Activated CD4-positive, alpha-beta T cell treated with anti-CD3 and anti-CD28 coated beads, Interleukin-2, amount 10 ng/mL, durations not matched to agents 24 days and 14 days (primary cell): ENCODE measurements at regions of chr22 and their contacts with region 1.

Region 1: GRCh38 chr22:20116951-20117645 is at the start of gene TRMT2A:
- DNase-seq: peak; percentile 99
- H3K4me3 Mint-ChIP-seq: peak within 1 kb of the TSS; percentile 96
- H3K27ac Mint-ChIP-seq: peak within 1 kb of the TSS; percentile 96
- H3K4me1 Mint-ChIP-seq: peaks cover 33% of the 10 kb centered on the region
- H3K27me3 Mint-ChIP-seq: peaks cover 2% of the 10 kb centered on the region
- total RNA-seq, gene TRMT2A: 125 and 135 TPM in 2 replicates

Region 2: DNA sequence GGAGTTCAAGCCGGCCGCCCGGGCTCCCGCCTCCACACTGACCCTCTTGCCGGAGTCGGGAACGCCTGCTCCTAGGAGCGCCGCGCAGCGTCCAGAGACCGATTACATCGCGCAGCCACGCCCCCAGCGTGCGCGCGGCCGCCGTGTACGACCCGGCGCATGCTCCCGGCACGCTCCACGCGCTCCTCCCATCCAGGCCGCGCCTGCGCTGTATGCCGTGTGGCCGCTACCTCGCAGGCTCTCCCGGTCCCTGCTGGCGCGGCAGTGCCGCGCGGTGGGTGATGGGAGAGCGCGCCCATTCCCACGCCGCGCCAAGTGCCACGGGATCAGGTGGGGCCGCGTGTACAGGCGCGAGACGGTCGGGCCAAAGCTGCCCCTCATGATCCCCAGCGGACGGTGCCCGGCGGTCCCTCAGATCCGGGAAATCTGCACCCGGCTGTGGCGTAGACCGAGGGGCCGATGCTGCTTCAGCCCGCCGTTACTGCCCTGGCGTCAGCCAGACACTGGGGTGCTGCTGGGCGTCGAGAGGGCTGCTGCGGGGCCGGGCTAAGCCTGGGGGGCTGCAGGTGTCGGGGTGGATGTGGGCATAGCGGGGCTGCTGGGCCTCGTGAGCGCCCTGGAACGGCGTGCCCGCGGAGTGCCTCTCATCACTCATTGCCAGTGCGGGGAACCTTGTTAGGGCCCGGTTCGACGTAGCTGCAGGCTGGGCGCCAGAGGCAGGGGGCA is 262.2 kb before region 1 on chr22 and contains the starts of genes GNB1L and RTL10:
- intact Hi-C with region 1: loop called (anchors 10 kb)
- DNase-seq: peak; percentile 99
- H3K4me3 Mint-ChIP-seq: peak within 1 kb of the TSS; percentile 92
- H3K27ac Mint-ChIP-seq: peak within 1 kb of the TSS; percentile 96
- H3K4me1 Mint-ChIP-seq: peaks cover 24% of the 10 kb centered on the region
- H3K27me3 Mint-ChIP-seq: no peaks in the 10 kb centered on the region
- total RNA-seq, gene GNB1L: 21.1 and 21.4 TPM in 2 replicates
- total RNA-seq, gene RTL10: 20.0 and 23.4 TPM in 2 replicates

Region 3: DNA sequence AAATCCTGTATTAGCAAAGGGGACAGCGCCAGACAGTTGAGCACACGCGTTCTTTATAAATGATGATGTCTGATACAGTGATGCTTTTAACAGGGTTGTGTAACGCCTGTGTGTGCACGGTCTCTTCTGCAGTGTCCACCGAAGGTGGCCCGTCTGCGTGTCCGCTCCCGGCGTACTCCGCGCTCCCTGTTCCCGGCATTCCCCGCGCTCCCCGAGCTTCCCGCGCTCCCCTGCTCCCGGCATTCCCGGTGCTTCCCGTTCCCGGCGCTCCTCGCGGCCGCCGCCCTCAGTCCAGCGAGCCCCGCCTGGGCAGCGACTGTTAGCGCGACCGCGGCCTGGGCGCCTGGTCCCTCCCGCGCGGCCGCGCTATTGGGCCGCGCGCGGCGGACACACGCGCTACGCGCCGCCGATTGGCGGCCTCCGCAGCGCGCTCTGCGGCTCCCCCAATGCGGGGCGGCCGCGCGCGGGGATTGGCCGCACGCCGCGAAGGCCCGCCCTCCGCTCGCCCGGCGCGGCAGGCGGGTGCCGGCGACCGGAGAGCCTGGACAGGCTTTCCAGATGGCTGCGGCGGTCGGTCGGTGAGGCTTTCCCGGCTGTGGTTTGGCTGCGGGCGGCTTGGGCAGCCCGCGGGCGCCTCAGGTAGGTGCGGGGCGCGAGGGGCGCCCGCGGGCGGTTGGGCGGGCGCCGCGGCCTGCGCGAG is 37.2 kb before region 1 on chr22 and contains the start of gene DGCR8:
- intact Hi-C with region 1: loop called (anchors 1 kb)
- DNase-seq: peak; percentile 93
- H3K4me3 Mint-ChIP-seq: peak within 1 kb of the TSS; percentile 91
- H3K27ac Mint-ChIP-seq: peak within 1 kb of the TSS; percentile 85
- H3K4me1 Mint-ChIP-seq: peaks cover 33% of the 10 kb centered on the region
- H3K27me3 Mint-ChIP-seq: no peaks in the 10 kb centered on the region
- total RNA-seq, gene DGCR8: 73.2 and 74.2 TPM in 2 replicates

Region 4: GRCh38 chr22:20130739-20131596 is 13.9 kb after region 1 on chr22:
- intact Hi-C with region 1: loop called (anchors 1 kb)
- DNase-seq: peak; percentile 92
- H3K4me3 Mint-ChIP-seq: peak overlapping the region; percentile 52
- H3K27ac Mint-ChIP-seq: no peak overlapping the region
- H3K4me1 Mint-ChIP-seq: peaks cover 13% of the 10 kb centered on the region
- H3K27me3 Mint-ChIP-seq: no peaks in the 10 kb centered on the region

Region 5: DNA sequence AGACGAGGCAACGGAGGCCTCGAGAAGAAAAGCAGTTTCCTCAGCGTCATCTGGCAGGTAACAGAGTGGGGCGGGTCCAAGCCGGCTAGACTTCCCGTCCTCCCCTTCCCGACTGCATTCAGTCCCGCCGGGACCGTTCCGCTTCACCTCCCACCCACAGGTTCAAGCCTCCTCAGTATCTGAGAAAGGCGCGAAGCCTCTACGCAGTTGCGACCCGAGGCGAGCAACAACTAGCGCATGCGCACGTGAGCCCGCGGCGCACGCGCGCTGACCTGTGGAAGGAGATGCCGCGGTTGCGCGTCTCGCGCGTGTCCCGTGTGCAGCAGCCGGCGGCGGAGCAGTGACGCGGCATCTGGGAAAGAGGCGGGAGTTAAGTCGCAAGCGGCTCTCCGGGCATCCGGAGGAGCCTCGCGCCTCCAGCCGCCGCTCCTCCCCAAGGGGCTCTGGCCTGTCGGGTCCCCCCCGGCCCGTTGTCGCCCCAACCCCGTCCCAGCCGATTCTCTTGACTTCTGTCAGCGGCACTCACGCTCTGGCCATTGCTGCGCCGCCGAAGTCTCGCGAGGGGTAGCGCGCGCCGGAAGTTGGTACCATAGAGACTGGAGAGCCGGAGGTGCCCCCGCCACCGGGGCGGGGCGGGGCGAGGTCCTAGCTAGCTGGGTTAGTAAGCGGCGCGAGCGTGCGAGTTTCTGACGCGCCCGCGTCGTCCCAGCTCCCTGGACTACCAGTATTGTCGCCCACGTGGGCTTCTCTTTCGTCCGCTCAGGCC is 884.6 kb after region 1 on chr22 and contains the start of gene THAP7:
- intact Hi-C with region 1: loop called (anchors 5 kb)
- DNase-seq: peak; percentile 99
- H3K4me3 Mint-ChIP-seq: peak within 1 kb of the TSS; percentile 97
- H3K27ac Mint-ChIP-seq: peak within 1 kb of the TSS; percentile 99
- H3K4me1 Mint-ChIP-seq: peaks cover 14% of the 10 kb centered on the region
- H3K27me3 Mint-ChIP-seq: no peaks in the 10 kb centered on the region
- total RNA-seq, gene THAP7: 30.3 and 31.5 TPM in 2 replicates